ENCODE measurements at regions of chr6 and their contacts with region 1.

Region 1: GRCh38 chr6:150417899-150418826 is 49.4 kb downstream of the IYD start:
- DNase-seq: no peak

Region 2: DNA sequence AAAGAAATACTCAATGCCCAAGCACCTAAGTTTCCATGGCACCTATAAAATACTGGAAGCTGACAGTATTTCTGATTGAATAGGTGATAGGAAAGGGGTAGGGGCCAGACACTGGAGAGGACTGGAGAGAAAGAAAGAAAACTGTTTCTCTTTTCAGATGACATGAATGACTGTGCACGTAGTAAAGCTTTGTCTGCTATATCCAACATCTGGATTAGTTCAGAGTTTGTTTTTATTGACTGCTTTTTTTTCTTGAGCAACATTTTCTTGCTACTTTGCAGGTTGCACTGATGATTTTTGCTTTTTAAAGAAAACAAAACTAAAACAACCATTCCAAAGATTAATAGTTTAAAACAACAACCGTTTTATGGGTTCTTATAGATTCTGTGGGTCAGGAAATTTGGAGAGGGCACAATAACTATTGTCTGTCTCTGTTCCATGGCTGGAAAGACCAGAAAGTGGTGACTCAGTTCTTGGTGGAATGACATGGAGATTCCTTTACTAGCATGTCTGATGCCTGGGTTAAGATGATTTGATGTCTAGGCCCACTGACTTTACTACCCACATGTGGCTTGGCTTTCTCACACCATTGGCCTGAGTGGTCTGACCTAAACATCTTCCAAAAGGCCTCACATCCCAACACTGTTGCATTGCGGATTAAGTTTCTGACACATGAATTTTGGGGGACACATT is 541.8 kb before region 1 on chr6:
- intact Hi-C with region 1: no loop called
- DNase-seq: no peak

Region 3: DNA sequence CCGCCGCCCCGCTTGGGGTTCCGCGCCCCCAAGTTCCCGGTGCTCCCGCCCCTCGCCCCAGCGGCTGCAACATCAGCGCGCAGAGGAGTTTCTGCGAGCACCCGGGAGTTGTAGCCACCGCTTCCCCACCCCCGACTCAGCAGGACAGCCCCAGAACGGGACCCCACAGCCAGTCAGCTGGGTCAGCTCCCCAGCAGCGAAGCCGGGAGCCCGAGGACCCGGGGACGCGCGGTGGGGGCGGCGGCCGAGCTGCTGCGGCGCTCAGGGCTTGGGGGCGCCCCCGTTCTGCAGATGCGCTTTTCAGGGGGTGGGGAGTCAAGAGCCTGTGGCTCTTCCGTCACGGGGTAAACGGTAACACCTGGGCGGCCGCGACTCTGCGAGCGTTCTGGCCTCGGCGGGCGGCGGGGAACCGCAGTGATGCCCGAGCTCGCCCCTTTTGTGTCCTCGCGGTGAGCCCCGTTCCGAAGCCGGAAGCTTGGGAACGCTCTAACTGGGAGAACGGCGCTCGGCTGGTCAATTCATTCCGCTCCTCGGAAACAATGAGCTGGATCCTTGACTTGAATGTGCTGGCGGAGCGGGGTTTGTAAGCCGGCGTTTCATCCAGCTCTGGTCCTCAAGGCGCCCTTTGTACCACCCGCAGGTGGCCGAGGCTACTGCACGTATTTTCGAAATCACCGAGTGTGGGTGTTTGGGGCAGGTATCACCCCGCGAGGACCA is 182.3 kb after region 1 on chr6:
- intact Hi-C with region 1: loop called (anchors 5 kb)
- DNase-seq: peak; percentile 33 to 90 (median 55)